Stomach (tissue), 19 donors: ENCODE measurements at regions of chr6 and their contacts with region 1.

Region 1: DNA sequence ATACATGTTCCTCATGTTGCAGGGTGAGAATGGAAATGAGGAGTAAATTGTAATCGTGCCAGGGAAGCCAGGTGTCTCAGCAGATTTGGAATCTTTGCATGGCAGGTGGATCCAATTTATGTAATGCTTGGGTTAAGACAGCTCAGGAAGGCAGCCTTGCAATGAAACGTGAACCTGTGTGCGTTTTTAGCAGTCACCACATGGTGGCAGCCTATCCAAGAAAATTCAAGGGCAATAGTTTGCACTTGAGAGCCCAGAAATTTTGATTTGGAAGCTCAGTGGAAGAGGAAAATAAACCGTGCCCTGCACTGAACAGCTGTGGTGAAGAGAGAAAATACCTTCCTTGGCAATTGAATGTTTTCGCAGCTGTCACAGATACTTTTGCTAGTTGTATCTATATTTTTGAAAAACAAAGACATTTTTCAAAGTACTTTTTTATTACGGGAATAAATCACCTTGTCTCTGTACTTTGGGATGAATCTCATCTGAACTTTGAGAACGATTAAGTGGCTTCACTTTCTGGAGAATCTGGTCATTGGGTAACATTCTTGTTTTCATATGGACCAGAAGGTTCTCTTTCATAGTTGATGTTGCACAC is 26.5 kb downstream of the MTHFD1L start:
- DNase-seq: peak; percentile 71 to 92
- H3K4me3 ChIP-seq: no peak overlapping the region
- H3K27ac ChIP-seq: no peak overlapping the region
- H3K4me1 ChIP-seq: peaks cover 4 to 14% (median 8%) of the 10 kb centered on the region in 4 donors
- H3K27me3 ChIP-seq: no peaks in the 10 kb centered on the region
- CTCF ChIP-seq: peak in 5 of 7 experiments; percentile 54 to 86 (median 80)
- EP300 ChIP-seq: no peak
- POLR2A ChIP-seq: no peak

Region 2: DNA sequence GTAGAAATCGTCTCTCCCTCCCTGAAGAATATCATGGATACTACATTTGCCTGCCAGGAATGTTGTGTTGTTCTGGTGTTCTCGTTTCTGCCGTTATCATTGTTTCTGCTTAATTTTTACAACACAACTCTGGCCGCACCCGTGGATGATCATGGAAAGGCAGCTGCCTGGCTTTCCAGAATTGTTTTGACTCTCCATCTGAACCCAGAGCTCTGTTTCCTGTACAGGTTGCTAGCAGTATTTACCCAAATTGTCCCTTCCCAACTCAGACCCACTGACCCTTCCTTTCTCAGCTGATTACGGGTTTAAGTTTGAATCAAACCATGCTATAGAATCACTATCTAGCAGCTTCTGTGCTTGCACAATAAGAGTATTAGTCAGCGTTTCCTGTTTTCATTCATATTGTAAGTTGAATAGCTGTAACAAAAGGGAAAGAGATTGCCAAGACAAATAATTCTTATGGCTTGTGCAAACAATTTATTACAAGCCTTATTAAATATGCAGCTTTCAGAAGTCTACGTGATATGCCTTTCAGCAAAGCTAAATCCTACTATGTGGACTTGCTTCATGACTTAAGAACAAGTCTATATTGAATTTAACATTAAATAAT is 112.5 kb after region 1 on chr6:
- intact Hi-C with region 1: loop called (anchors 10 kb)
- DNase-seq: peak in 1 of 2 donors; percentile 85
- H3K4me3 ChIP-seq: no peak overlapping the region
- H3K27ac ChIP-seq: peak overlapping the region; percentile 11 to 73 (median 59)
- H3K4me1 ChIP-seq: peaks cover 11 to 30% (median 17%) of the 10 kb centered on the region in 4 donors
- H3K27me3 ChIP-seq: no peaks in the 10 kb centered on the region
- CTCF ChIP-seq: no peak
- EP300 ChIP-seq: no peak
- POLR2A ChIP-seq: no peak

Region 3: GRCh38 chr6:151330134-151330696 is 438.2 kb after region 1 on chr6:
- intact Hi-C with region 1: loop called (anchors 5 kb)
- DNase-seq: peak in 1 of 2 donors; percentile 81
- H3K4me3 ChIP-seq: no peak overlapping the region
- H3K27ac ChIP-seq: peak overlapping the region in 1 of 5 donors; percentile 26
- H3K4me1 ChIP-seq: peaks cover 9 to 32% (median 12%) of the 10 kb centered on the region in 4 donors
- H3K27me3 ChIP-seq: peaks cover 0 to 5% (median 0%) of the 10 kb centered on the region in 3 donors
- CTCF ChIP-seq: no peak
- EP300 ChIP-seq: no peak
- POLR2A ChIP-seq: no peak